PC-9 (cell line): ENCODE measurements at regions of chr18 and their contacts with region 1.

Region 1: DNA sequence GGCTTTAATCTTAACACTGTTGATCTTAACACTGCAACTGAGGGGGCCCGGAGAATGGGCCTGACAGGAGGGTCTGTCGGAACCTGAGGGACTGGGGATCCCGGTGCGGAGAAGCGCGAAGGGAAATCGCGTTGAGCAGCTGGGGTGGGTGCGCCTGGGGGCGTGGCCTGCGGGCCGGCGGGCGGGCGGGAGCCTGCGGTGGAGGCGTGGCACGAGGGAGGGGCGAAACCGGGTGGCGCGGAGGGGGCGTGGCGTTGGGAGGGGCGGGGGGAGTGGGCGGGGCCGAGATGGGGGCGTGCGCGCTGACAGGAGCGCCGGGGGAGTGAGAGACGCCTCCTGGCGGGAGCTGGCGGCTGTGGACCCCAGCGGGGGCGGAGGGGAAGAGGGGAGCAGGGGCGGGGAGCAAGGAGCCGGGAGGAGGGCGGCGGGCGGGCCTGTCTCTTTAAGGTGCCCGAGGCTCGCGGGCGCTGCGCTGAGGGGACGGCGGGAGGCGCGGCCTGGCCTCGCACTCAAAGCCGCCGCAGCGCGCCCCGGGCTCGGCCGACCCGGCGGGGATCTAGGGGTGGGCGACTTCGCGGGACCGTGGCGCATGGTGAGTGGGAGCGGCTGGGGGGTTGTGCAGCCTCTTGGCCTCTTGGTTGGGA is at the start of gene TWSG1:
- DNase-seq: peak; percentile 75 to 97
- H3K4me3 ChIP-seq: peak within 1 kb of the TSS; percentile 100
- H3K27ac ChIP-seq: no peak within 1 kb of the TSS
- H3K4me1 ChIP-seq: peaks cover 23% of the 10 kb centered on the region
- H3K27me3 ChIP-seq: no peaks in the 10 kb centered on the region
- CTCF ChIP-seq: peak; percentile 37
- total RNA-seq, gene TWSG1: 52.1 and 55.8 TPM in 2 replicates

Region 2: GRCh38 chr18:9082711-9083510 is 251.5 kb before region 1 on chr18:
- CTCF ChIA-PET with region 1: no interaction called
- POLR2A ChIA-PET with region 1: interaction called, 23 read pairs
- intact Hi-C with region 1: no loop called
- DNase-seq: no peak
- H3K4me3 ChIP-seq: no peak overlapping the region
- H3K27ac ChIP-seq: no peak overlapping the region
- H3K4me1 ChIP-seq: no peaks in the 10 kb centered on the region
- H3K27me3 ChIP-seq: no peaks in the 10 kb centered on the region
- CTCF ChIP-seq: no peak

Region 3: GRCh38 chr18:9366192-9366591 is 31.7 kb after region 1 on chr18:
- CTCF ChIA-PET with region 1: no interaction called
- POLR2A ChIA-PET with region 1: interaction called, 16 read pairs
- intact Hi-C with region 1: no loop called
- DNase-seq: peak in 1 of 2 experiments; percentile 71
- H3K4me3 ChIP-seq: no peak overlapping the region
- H3K27ac ChIP-seq: no peak overlapping the region
- H3K4me1 ChIP-seq: peaks cover 40% of the 10 kb centered on the region
- H3K27me3 ChIP-seq: no peaks in the 10 kb centered on the region
- CTCF ChIP-seq: no peak

Region 4: GRCh38 chr18:9466846-9467245 is 132.4 kb after region 1 on chr18:
- CTCF ChIA-PET with region 1: no interaction called
- POLR2A ChIA-PET with region 1: interaction called, 34 read pairs
- intact Hi-C with region 1: no loop called
- DNase-seq: no peak
- H3K4me3 ChIP-seq: no peak overlapping the region
- H3K27ac ChIP-seq: no peak overlapping the region
- H3K4me1 ChIP-seq: no peaks in the 10 kb centered on the region
- H3K27me3 ChIP-seq: no peaks in the 10 kb centered on the region
- CTCF ChIP-seq: no peak

Region 5: GRCh38 chr18:9643549-9643948 is 309.1 kb after region 1 on chr18:
- CTCF ChIA-PET with region 1: no interaction called
- POLR2A ChIA-PET with region 1: no interaction called
- intact Hi-C with region 1: loop called (anchors 1 kb)
- DNase-seq: peak; percentile 74 to 97
- H3K4me3 ChIP-seq: peak overlapping the region; percentile 13; the same call in 1 of the 2 replicates
- H3K27ac ChIP-seq: peak overlapping the region; percentile 84
- H3K4me1 ChIP-seq: peaks cover 52% of the 10 kb centered on the region
- H3K27me3 ChIP-seq: no peaks in the 10 kb centered on the region
- CTCF ChIP-seq: no peak